ENCODE measurements at regions of chr2 and their contacts with region 1.

Region 1: GRCh38 chr2:15939854-15940660 is at the start of gene MYCN:
- DNase-seq: peak; percentile 78
- ATAC-seq: peak; percentile 46
- H3K4me3 Mint-ChIP-seq: peak within 1 kb of the TSS; percentile 52
- H3K27ac Mint-ChIP-seq: no peak within 1 kb of the TSS
- H3K4me1 Mint-ChIP-seq: peaks cover 25% of the 10 kb centered on the region
- H3K27me3 Mint-ChIP-seq: peaks cover 41% of the 10 kb centered on the region
- total RNA-seq, gene MYCN: 0.18 to 0.28 TPM

Region 2: GRCh38 chr2:15965564-15966019 is 25.5 kb after region 1 on chr2:
- CTCF ChIA-PET with region 1: interaction called, 5 read pairs
- POLR2A ChIA-PET with region 1: no interaction called
- intact Hi-C with region 1: loop called in 1 of 2 experiments (anchors 2 kb)
- DNase-seq: peak; percentile 80
- ATAC-seq: peak; percentile 67
- H3K4me3 Mint-ChIP-seq: no peak overlapping the region
- H3K27ac Mint-ChIP-seq: peak overlapping the region; percentile 65
- H3K4me1 Mint-ChIP-seq: peaks cover 52% of the 10 kb centered on the region
- H3K27me3 Mint-ChIP-seq: peaks cover 2% of the 10 kb centered on the region

Region 3: DNA sequence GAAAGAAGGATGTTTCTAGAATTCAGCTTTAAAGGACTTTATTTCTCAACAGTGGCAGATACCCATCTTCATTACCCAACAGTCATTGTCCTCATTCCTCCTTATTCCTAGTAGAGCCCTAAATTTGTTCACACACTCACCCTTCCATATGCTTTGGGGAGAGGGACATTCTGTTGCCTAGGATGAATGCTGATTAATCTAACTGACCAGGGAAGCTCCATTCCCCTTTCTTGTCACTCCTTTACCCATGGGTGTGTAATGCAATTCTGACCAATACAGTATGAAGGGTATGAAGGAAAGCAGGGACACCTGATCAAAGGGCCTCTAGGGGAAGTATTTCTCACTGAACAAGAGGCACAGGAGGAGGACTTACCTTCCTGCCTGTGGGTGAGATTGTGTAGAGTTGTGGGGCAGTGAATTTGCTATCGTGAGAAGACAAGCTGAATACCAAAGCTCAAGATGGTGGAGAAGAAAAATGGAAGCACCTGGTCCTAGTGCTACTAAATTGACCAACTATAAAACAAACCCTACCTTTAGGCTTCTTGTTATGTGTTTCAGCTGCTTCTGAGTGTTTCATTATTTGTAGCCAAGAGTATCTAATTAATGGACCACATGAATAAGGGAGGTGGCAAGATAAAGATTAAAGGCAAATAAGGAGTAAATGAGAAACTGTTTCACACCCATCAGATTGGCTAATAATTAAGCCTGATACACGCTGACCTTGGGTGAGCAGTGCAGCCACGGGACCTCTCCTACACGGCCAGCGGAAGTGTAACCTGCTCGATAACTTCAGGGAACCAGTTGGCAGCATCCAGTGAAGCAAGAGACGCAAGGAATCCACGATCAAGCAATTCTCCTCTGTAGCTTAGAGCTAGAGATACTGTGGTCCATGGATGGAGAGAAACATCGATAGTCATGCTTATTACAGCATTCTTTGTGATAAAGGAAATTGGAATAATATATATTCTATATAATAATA is 202.6 kb after region 1 on chr2:
- CTCF ChIA-PET with region 1: interaction called, 3 read pairs
- POLR2A ChIA-PET with region 1: no interaction called
- intact Hi-C with region 1: loop called in 1 of 2 experiments (anchors 5 kb)
- DNase-seq: peak; percentile 12
- ATAC-seq: peak; percentile 86
- H3K4me3 Mint-ChIP-seq: no peak overlapping the region
- H3K27ac Mint-ChIP-seq: no peak overlapping the region
- H3K4me1 Mint-ChIP-seq: no peaks in the 10 kb centered on the region
- H3K27me3 Mint-ChIP-seq: no peaks in the 10 kb centered on the region

Region 4: DNA sequence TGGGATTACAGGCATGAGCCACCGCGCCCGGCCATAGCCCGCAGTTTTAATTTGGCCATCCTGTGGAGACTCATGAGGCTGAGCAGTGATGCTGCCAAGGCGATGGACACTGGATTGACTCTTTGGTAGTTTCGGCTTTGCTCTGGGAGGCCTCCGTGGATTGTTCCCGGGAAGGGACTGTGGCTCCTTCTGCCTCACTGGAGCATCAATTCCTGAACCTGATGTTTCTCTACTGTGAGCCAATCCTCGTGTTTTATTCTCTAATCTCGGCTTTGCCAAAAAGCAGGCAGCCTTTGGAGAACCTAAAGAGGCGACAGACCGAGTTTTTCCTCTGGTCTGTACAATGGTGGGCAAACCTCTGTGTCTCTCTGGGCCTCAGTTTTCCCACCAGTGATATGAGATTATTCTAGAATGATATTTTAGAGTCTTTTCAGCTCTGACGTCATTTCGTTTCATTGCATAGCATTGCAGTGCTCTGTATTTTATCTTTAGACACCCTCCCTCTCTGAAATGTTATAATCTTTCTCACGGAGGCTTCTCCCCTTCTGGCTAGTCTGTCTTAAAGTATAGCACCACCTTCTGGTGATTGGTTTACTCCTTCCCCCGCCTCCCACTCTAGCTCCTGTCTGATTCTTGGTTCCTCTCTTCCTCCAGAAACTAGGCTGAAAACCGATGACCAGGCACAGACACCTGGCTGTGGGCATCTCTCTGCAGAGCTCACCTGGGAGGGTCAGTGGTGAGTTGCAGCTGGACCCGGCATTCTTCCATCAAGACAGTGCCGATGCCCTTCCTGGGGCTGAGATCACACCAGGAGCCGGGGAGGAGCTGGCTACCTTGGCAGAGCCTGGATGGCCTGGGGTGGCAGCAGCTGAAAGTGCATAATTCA is 341.6 kb after region 1 on chr2:
- CTCF ChIA-PET with region 1: interaction called, 26 read pairs
- POLR2A ChIA-PET with region 1: no interaction called
- intact Hi-C with region 1: loop called (anchors 1 to 2 kb)
- DNase-seq: peak; percentile 16
- ATAC-seq: peak; percentile 61
- H3K4me3 Mint-ChIP-seq: no peak overlapping the region
- H3K27ac Mint-ChIP-seq: no peak overlapping the region
- H3K4me1 Mint-ChIP-seq: no peaks in the 10 kb centered on the region
- H3K27me3 Mint-ChIP-seq: no peaks in the 10 kb centered on the region

Region 5: DNA sequence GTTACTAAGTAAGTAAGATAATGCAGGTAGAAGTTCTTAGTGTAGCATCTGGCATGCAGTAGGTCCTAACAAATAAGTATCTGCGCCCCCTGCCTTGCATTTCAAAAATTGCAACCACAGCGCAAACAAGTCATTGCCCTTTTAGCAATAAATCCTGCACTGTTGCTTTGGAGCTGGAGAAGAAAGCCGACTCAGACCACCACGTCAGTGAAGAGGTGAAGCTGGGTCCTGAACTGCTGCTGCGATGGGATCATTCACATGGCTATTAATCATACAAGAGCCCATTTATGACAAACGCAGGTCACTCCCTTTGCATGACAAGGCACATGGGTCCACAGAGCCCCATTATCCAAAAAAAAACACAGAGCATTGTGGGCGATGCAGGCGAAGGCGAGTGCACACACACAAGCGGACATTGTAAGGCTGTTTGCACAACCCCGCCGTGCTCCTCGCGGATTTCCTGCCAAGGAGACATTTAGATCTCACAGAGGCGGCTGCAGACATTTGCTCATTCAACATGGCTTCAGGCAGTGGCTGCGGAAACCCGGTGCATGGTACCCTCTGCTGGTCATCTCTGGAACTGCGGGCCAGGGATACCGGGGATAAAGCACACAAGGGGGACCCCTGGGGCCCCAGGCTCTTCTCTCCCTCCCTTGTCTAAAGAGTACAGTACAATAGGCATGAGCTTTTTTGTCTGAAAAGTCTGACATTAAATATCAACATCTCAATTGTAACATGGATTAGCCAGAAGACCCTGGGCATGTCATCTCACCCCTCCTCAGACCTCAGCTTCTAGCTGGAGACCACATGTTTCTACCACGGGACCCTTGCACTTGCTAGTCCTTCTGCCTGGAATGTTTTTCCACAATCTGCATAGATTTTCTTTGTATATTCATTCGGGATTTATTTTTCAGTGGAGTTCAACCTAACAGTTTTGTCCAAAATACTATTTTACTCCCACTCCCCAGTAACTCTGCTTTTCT is 668.9 kb after region 1 on chr2:
- CTCF ChIA-PET with region 1: interaction called, 8 read pairs
- POLR2A ChIA-PET with region 1: no interaction called
- intact Hi-C with region 1: loop called (anchors 1 to 2 kb)
- DNase-seq: peak; percentile 92
- ATAC-seq: peak; percentile 87
- H3K4me3 Mint-ChIP-seq: peak overlapping the region; percentile 74
- H3K27ac Mint-ChIP-seq: peak overlapping the region; percentile 65
- H3K4me1 Mint-ChIP-seq: peaks cover 6% of the 10 kb centered on the region
- H3K27me3 Mint-ChIP-seq: no peaks in the 10 kb centered on the region